Right ventricle myocardium superior (tissue), 1 donor: ENCODE measurements at regions of chr9 and their contacts with region 1.

Region 1: GRCh38 chr9:116661037-116661954 is 25.8 kb upstream of the TRIM32 start:
- DNase-seq: no peak
- ATAC-seq: peak; percentile 88

Region 2: GRCh38 chr9:115591584-115591984 is 1069.7 kb before region 1 on chr9:
- intact Hi-C with region 1: loop called (anchors 5 kb)
- DNase-seq: peak; percentile 50
- ATAC-seq: peak; percentile 80

Region 3: DNA sequence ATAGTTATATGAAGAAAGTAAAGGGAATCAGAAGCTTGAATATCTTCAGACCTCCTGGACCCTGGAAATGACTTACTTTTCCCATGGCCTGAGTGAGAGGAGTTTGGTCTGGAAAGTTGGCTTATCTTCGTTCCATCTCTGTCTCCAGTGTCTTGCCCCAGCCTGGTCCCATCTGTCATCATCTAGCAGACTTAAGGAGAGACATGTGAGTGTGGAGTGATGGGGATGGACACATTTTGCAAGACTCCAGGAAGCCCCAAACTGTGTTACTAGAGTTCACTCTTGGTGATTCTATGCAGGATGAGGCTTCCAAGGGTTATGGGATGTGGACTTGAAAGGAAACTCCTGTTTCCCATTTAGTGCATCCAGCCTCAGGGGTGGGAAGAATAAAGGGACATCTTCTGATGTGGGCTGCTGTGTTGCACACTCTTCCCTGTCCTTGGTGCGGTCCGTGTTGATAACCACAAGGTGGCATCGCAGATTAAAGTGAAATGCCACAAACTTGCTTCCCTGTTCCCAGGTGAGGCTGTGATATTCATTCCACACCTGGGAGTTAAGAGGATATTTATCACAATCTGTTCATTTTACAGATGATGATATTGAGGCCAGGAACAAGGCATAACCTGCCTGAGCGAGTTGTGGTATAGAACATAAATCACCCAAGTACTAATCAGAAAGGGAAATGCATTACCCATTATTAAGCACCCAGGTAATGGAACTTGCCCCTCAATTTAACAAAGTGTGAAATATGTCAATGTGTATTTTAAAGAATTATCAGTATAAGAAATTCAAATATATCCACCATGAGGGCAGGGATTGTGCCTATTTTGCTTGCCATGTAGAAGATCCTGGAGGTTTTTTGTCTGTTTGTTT is 777.6 kb before region 1 on chr9:
- intact Hi-C with region 1: loop called (anchors 10 kb)
- DNase-seq: no peak
- ATAC-seq: peak; percentile 91

Region 4: DNA sequence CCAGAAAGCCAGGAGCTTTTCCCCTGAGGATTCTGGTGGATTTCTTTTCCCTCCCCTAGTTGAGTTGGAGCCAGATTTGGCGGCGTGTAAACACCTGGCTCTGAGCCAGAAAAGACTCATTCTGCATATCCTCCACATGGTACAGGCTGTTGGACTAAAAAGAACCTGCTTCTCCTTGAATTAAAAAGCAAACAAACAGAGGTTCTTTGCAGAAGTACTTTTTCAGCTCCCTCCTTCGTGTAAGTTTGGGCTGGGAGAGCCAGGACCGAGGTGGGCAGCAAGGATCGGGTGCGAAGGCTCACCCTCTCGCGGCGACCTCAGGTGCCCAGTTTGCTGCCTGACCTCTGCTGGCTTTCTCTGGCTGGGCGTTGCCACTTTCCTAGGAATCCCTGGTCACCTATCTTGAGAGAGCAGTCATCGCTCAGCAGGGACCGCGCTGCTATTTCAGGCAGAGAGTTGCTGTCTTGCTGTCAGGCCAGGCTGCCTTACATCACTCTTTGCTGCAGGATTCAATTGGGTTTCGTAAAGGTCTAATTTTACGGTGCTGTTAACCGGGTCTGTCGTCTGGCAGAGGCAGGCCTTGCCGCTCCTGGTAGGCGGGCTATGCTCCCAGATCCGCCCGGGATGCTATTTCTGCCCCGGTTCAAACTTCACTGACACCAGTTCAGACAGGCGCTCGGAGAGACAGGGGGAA is 504.5 kb before region 1 on chr9:
- intact Hi-C with region 1: loop called (anchors 5 kb)
- DNase-seq: peak; percentile 82
- ATAC-seq: peak; percentile 90